ENCODE measurements at regions of chr5 and their contacts with region 1.

Region 1: DNA sequence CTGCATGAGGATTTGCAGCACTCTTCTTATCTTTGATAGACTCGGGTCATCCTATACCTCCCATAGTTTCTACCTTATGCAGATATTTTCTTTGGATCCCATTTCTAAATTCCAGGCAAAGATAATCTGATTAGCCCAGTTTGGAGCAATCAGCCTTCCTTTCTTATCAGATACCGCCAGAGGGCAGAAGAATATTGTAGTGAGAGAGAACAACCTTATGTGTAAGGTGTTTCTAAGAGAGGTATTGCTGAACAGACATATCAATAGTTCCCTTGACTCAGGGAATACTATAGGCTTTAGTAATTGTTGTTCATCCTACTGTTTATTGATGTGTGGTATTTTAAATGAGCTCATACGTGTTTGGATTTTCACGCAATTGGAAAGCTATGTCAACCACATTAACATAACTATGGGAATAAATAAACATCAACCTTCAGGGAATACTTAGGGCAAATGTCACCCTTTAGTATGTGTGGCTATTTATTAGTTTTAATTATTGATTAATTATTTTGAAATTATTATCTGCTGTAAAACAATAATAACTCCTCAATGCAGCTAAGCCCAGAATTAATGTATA is 1435.2 kb upstream of the CDH9 start:
- DNase-seq: peak; percentile 1
- H3K4me3 Mint-ChIP-seq: no peak overlapping the region
- H3K27ac Mint-ChIP-seq: no peak overlapping the region
- H3K4me1 Mint-ChIP-seq: no peaks in the 10 kb centered on the region
- H3K27me3 Mint-ChIP-seq: no peaks in the 10 kb centered on the region
- CTCF ChIP-seq: no peak

Region 2: GRCh38 chr5:28344803-28345433 is 128.7 kb before region 1 on chr5:
- CTCF ChIA-PET with region 1: no interaction called
- intact Hi-C with region 1: loop called (anchors 5 kb)
- DNase-seq: peak; percentile 13
- H3K4me3 Mint-ChIP-seq: no peak overlapping the region
- H3K27ac Mint-ChIP-seq: no peak overlapping the region
- H3K4me1 Mint-ChIP-seq: no peaks in the 10 kb centered on the region
- H3K27me3 Mint-ChIP-seq: no peaks in the 10 kb centered on the region
- CTCF ChIP-seq: peak; percentile 12

Region 3: GRCh38 chr5:28896949-28897348 is 423.3 kb after region 1 on chr5:
- CTCF ChIA-PET with region 1: no interaction called
- intact Hi-C with region 1: loop called (anchors 10 kb)
- DNase-seq: no peak
- H3K4me3 Mint-ChIP-seq: no peak overlapping the region
- H3K27ac Mint-ChIP-seq: no peak overlapping the region
- H3K4me1 Mint-ChIP-seq: no peaks in the 10 kb centered on the region
- H3K27me3 Mint-ChIP-seq: no peaks in the 10 kb centered on the region
- CTCF ChIP-seq: no peak